ENCODE measurements at regions of chr19 and their contacts with region 1.

Region 1: DNA sequence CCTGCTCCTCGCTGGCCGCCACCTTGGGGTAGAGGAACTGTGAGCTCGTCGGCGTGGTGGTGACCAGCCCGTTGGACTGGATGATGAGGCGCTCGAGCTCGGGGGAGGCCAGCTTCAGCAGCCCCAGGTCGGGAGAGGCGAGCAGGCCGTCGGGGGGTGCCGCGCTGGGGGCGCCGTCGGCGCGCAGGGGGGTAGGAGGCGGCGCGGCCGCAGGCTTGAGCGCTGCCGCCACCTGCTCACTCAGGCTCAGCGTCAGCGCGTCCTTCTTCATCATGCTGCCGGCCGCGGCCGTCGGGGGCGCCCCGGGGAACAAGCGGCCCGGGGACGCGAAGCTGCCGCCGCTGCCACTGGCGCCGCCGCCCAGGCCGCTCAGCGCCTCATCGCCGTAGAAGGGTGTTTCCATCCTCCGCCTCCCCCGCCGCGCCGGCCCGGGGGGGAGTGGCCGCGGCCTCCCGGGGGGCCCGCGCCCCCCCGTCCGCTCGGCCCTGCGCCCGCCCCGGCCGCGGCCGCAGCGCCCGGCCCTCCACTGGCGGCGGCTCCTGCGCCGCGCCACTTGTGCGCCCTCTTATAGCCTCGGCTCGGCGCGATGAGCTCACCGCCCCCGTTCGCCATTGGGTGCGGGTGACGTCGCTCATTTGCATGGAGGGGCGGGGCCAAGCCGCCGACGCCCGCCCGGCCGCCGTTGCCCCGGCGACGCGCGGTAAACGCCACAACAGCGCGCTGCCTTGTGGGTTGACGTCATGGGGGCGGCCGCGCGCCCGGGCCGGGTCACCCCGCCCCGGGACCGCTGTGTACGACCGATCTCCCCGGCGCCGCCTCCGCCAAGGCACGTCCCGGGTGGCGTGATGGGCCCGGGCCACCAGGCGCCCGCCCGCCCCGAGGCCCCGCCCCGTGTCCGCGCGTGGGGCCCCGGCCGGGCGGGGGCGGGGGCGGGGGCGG is at the start of gene JUND:
- DNase-seq: peak; percentile 93 to 99 (median 98)

Region 2: DNA sequence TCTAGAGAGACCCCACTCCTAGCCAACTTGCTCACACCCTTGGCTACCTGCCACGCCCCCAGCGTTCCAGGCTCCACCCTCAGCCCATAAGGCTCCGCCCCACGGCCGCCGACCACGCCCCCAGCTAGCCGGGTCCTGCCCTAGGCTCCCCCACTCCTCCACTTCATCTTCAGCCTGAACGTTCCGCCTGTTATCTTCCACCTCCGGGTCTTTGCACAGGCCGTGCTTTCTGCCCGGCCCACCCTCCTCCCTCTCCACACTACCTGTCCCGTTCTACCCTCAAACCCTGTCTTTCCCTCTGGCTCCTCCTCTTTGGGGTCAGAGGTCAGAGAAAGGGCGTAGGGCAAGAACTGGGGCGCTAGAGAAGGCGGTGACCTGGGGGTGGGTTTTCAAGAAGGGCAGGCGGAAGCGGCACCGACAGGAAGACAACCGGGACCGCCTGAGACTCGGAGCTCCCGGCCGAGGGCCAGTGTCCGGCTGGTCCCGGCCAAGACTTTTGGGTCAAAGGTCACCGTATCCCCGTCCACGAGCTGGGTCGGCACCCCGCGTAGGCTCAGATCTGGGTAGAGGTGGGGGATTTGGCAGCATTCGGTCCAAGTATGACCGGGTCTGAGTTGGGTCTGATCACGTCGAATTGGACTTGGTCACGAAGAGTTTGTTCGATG is 57.4 kb before region 1 on chr19:
- intact Hi-C with region 1: no loop called
- DNase-seq: peak in 26 of 42 donors; percentile 11 to 60 (median 35)

Region 3: DNA sequence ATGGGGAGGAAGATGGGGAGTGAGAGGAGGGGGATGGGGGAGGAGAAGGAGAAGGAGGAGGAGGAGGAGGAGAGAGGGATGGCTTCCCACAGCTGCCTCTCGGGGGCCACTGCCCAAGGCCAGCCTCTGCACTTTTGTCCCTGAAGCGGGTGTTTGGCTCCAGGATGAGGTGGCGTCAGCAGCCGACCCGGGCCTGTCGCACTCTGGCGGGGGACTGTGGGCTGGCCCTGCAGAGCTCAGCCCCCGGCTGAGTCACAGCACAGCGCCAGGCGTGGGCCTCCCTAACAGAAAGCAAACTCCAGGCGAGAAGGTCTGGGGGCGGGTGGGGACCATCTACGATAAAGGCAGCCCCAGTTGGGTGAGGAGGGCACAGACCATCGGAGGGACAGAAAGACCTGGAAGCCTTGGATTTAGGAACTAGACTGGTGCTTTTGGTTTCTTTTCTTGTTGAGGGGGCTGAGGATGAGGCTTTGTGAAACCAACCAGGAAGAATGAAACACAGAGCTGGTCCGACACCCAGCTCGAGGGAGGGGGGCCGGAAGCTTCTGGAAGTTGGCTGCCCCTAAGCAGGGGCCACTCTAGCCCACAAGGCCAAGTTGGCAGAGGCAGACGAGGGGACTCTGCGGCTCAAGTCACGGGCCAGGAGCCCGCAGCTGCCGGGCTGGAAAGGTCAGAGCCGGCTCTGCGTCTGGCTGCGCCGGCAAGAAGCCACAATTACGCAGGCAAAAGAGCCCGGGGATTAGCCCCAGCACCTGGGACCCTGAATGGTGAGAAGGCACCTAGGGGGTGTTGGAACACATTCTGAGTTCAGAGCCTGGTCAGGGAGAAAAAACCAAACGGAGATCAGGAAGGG is 23.3 kb after region 1 on chr19:
- intact Hi-C with region 1: loop called (anchors 2 kb)
- DNase-seq: peak; percentile 71 to 97 (median 88)

Region 4: GRCh38 chr19:18322759-18323460 is 41.6 kb after region 1 on chr19 and contains the start of gene LSM4:
- intact Hi-C with region 1: loop called (anchors 2 kb)
- DNase-seq: peak; percentile 96 to 99 (median 98)

Region 5: GRCh38 chr19:18328340-18329034 is 47.1 kb after region 1 on chr19:
- intact Hi-C with region 1: loop called (anchors 2 kb)
- DNase-seq: peak; percentile 78 to 98 (median 94)

Region 6: GRCh38 chr19:18419195-18419698 is 137.9 kb after region 1 on chr19 and contains the start of gene SSBP4:
- intact Hi-C with region 1: loop called (anchors 2 kb)
- DNase-seq: peak in 33 of 42 donors; percentile 58 to 86 (median 71)

Measured in head of caudate nucleus (tissue), 42 donors.